Prostate gland (tissue), 2 donors: ENCODE measurements at regions of chr7 and their contacts with region 1.

Region 1: DNA sequence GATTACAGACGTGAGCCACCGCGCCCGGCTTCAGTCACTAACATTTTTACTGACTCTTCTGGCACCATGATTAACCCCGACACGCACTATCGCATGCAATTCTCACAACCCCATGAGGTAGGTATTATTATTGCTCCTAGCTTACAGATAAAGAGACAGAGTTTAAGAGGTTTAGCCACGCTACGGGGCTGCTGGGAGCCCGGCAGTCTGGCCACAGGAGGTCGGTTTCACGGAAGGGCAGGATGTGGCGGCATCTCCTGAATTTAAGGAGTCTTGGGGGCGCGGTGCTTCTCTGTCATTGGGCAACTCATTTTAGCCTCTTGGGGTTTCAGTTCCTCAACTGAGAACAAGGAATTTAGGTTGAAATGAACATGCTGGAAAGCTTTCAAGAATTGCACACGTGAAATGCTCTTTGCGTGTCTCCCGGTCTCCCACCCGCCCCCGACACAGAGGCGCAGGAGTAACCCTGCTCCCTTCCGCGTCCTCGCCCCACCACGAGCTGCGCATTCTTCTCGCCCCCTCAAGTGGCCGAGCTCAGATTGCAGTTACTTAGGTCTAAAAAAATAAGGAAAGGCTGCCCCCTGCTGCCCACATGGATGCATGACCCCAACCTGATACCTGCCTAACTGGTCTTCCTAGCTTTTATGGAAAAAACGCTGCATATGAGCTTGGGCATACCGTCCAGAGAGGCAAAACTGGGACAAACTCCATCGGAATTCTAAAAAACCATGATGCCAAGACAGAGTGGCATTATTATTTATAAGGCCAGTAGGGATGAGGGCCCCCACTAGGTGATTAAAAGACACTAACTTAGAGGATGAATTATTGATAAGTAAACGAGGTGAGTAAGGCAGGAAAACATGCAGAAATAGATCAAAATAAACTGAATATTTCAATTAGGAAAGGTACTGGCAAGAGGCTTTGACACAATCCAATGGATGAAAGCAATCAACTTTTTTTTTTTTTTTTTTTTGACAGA is 12.4 kb downstream of the PRSS2 start:
- DNase-seq: peak; percentile 88
- H3K4me3 ChIP-seq: peak overlapping the region; percentile 7 to 20
- H3K27ac ChIP-seq: no peak overlapping the region
- H3K4me1 ChIP-seq: no peaks in the 10 kb centered on the region
- H3K27me3 ChIP-seq: no peaks in the 10 kb centered on the region
- CTCF ChIP-seq: peak; percentile 80 to 96 (median 94)
- POLR2A ChIP-seq: no peak

Region 2: DNA sequence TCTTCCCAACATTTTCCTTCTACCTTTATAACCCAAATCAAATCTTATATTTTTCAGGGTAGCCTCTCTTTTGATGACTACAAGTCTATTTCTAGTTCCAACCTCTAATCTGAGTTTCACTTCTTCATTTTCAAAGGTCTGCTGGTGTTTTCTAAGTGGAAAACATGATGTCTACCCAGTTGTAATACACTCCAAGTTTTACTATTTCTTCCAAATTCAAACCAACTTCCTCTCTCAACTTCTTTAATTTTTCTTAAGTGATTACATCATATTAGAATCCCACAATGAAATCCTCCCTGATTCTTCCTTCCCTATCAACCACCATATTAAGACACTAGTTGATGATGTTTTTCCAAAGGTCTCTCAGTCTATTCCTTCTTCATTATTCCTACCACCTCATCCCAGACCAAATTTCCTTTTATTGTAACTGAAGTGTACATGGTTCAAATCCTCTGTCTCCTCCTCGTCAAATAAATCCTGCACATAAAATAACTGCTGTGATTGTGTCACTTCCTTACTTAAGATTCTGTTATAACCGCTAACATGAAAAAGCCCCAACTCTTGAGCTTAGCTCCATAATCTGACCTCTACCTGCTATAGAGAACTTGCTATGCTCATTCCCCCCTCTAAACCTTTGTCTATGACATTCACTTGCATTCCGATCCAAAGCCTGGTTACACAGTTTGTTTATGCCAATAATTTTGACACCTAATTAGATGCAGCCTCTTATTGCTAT is 822.4 kb before region 1 on chr7:
- intact Hi-C with region 1: no loop called
- DNase-seq: no peak
- H3K4me3 ChIP-seq: no peak overlapping the region
- H3K27ac ChIP-seq: no peak overlapping the region
- H3K4me1 ChIP-seq: no peaks in the 10 kb centered on the region
- H3K27me3 ChIP-seq: no peaks in the 10 kb centered on the region
- CTCF ChIP-seq: no peak
- POLR2A ChIP-seq: no peak

Region 3: GRCh38 chr7:142603870-142604448 is 179.3 kb before region 1 on chr7:
- intact Hi-C with region 1: loop called (anchors 10 kb)
- DNase-seq: peak; percentile 23
- H3K4me3 ChIP-seq: no peak overlapping the region
- H3K27ac ChIP-seq: no peak overlapping the region
- H3K4me1 ChIP-seq: no peaks in the 10 kb centered on the region
- H3K27me3 ChIP-seq: no peaks in the 10 kb centered on the region
- CTCF ChIP-seq: peak in 3 of 4 experiments; percentile 60 to 70 (median 69)
- POLR2A ChIP-seq: no peak

Region 4: DNA sequence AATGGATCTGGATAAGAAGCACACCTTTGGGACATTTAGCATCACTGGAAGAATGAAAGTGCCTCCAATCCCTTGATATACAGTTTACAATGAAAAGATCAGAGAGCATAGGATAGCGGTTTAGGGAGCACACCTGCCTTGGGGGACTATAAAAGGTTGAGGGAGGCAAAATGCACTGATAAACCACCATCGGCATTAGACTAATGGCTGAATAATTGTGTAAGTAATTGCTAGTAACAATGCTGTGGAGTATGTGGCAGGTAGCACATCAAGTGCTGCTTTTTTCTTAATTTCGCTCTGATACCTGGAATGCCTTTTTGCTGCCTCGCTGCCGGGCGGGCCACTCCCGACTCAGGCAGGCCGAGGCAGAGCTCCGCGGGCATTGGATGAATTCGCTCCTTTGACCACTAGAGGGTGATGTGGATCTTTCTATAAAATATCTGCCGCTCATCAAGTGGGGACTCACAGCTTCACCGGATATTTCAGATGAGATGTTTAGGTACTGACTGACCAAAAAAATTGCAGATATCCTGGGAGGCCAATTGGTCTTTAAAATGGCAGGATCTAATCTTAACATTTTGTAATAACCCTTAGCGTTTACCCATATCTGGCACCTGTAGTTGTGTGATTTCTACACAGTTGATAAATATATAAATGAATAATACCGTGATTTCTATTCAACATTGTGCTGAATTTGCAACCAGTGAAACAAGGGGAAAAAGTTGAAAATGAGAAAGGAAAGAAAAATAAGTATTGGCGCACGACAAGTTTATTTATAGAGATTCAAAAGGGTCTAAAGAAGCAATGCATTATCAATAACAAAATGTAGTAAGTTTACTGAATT is 150.7 kb before region 1 on chr7:
- intact Hi-C with region 1: loop called (anchors 10 kb)
- DNase-seq: peak; percentile 44
- H3K4me3 ChIP-seq: no peak overlapping the region
- H3K27ac ChIP-seq: no peak overlapping the region
- H3K4me1 ChIP-seq: no peaks in the 10 kb centered on the region
- H3K27me3 ChIP-seq: no peaks in the 10 kb centered on the region
- CTCF ChIP-seq: peak in 3 of 4 experiments; percentile 62 to 69 (median 65)
- POLR2A ChIP-seq: no peak

Region 5: DNA sequence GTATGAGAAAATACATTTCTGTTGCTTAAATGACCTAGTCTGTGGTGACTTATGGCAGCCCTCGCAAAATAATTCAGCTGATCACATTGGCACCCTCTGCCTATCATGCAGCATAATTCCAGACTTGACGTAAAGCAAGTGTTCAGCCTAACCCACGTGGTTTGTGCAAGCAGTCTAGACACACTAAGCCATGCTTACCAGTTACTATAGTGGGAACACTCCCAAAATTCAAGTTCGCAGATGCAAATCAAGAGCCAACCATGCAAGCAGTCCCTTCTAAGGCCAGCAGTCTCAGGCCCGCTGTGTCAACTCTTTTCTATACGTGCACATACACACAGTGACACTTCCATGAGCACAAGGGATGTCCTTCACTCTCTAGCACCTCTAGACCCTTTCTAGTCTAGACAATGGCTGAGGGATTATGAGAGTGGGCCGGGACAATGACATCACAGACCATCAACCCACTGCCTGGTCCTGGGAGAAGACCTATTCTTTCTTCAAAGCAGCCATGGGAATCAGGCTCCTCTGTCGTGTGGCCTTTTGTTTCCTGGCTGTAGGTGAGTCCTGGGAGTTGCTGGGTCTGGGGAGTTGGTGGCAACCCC is 62.9 kb before region 1 on chr7:
- intact Hi-C with region 1: no loop called
- DNase-seq: no peak
- H3K4me3 ChIP-seq: no peak overlapping the region
- H3K27ac ChIP-seq: no peak overlapping the region
- H3K4me1 ChIP-seq: no peaks in the 10 kb centered on the region
- H3K27me3 ChIP-seq: no peaks in the 10 kb centered on the region
- CTCF ChIP-seq: no peak
- POLR2A ChIP-seq: no peak

Region 6: GRCh38 chr7:142943706-142944268 is 160.6 kb after region 1 on chr7:
- intact Hi-C with region 1: no loop called
- DNase-seq: peak; percentile 46
- H3K4me3 ChIP-seq: no peak overlapping the region
- H3K27ac ChIP-seq: no peak overlapping the region
- H3K4me1 ChIP-seq: no peaks in the 10 kb centered on the region
- H3K27me3 ChIP-seq: no peaks in the 10 kb centered on the region
- CTCF ChIP-seq: no peak
- POLR2A ChIP-seq: no peak